ENCODE measurements at regions of chr15 and their contacts with region 1.

Region 1: GRCh38 chr15:58546635-58547627 is 115.1 kb downstream of the LIPC start:
- DNase-seq: peak; percentile 77
- H3K4me3 ChIP-seq: no peak overlapping the region
- H3K27ac ChIP-seq: peak overlapping the region; percentile 58
- H3K4me1 ChIP-seq: peaks cover 27% of the 10 kb centered on the region
- H3K27me3 ChIP-seq: no peaks in the 10 kb centered on the region
- CTCF ChIP-seq: no peak
- POLR2A ChIP-seq: no peak

Region 2: DNA sequence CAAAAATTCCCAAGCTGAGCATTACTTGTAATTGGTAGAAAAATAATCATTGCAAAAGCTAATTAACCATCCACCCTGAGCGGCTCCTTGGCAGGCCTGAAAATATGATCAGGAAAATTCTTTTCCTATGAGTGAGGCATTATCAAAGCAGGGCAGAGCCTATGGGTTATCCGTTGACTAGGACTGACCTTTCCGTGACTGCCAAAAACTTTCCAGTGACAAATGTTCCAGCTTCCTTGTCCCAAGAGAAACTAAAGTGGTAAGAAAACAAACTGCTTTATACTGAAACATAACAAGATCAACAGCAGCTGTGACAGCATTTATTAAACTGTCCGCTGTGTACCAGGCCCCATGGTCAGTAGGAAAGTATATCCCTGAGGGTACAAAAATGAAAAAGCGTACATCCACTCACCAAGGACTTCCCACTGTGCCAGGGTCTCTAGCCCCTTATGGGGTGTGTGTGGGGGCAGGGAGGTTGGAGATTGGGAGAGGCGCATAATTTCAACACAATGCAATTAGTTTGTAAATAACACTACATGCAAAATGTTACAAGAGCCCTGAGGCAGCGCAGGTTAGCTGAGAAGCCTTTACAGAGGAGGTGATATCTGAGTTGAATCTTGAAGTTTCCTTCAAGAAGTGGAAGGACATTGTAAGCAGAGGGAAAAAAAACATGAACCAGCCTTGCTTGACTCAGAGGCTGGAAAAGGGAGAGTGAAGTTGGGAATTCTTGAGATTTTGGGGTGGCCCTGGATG is 106.6 kb before region 1 on chr15:
- CTCF ChIA-PET with region 1: interaction called, 6 read pairs
- POLR2A ChIA-PET with region 1: no interaction called
- dilution Hi-C with region 1: no loop called
- intact Hi-C with region 1: loop called (anchors 2 kb)
- DNase-seq: peak; percentile 90
- H3K4me3 ChIP-seq: no peak overlapping the region
- H3K27ac ChIP-seq: peak overlapping the region; percentile 82
- H3K4me1 ChIP-seq: peaks cover 32% of the 10 kb centered on the region
- H3K27me3 ChIP-seq: no peaks in the 10 kb centered on the region
- CTCF ChIP-seq: no peak
- POLR2A ChIP-seq: peak; percentile 34

Region 3: GRCh38 chr15:58510715-58511598 is 36.0 kb before region 1 on chr15:
- CTCF ChIA-PET with region 1: no interaction called
- POLR2A ChIA-PET with region 1: no interaction called
- dilution Hi-C with region 1: no loop called
- intact Hi-C with region 1: no loop called
- DNase-seq: peak; percentile 44
- H3K4me3 ChIP-seq: no peak overlapping the region
- H3K27ac ChIP-seq: no peak overlapping the region
- H3K4me1 ChIP-seq: peaks cover 8% of the 10 kb centered on the region
- H3K27me3 ChIP-seq: no peaks in the 10 kb centered on the region
- CTCF ChIP-seq: no peak
- POLR2A ChIP-seq: no peak

Region 4: GRCh38 chr15:58521293-58521991 is 25.5 kb before region 1 on chr15:
- CTCF ChIA-PET with region 1: interaction called, 4 read pairs
- POLR2A ChIA-PET with region 1: no interaction called
- dilution Hi-C with region 1: no loop called
- intact Hi-C with region 1: loop called (anchors 1 kb)
- DNase-seq: peak; percentile 88
- H3K4me3 ChIP-seq: no peak overlapping the region
- H3K27ac ChIP-seq: peak overlapping the region; percentile 72
- H3K4me1 ChIP-seq: peaks cover 27% of the 10 kb centered on the region
- H3K27me3 ChIP-seq: no peaks in the 10 kb centered on the region
- CTCF ChIP-seq: no peak
- POLR2A ChIP-seq: no peak

Region 5: DNA sequence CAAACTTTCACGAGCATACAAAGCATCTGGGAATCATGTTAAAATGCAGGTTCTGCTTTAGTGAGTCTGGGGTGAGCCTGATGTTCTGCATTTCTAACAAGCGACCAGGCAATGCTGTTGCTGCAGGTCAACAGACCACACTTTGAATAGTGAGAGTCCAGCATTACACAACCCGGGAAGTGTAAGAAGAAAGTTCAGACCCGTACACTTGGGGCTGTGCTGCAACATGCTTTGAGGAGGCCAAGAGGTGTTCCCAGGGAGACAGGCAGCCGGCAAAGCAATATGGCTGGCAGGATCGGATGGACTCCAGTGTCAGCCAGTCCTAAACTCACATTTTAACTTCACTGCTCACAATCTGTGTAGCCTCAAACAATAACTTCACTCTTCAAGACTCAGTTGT is 19.1 kb after region 1 on chr15:
- CTCF ChIA-PET with region 1: no interaction called
- POLR2A ChIA-PET with region 1: no interaction called
- dilution Hi-C with region 1: no loop called
- intact Hi-C with region 1: no loop called
- DNase-seq: no peak
- H3K4me3 ChIP-seq: no peak overlapping the region
- H3K27ac ChIP-seq: no peak overlapping the region
- H3K4me1 ChIP-seq: no peaks in the 10 kb centered on the region
- H3K27me3 ChIP-seq: no peaks in the 10 kb centered on the region
- CTCF ChIP-seq: no peak
- POLR2A ChIP-seq: no peak